IMR-90 (cell line): ENCODE measurements at regions of chr7 and their contacts with region 1.

Region 1: GRCh38 chr7:10412422-10413019 is 561.2 kb upstream of the PHF14 start:
- DNase-seq: peak; percentile 1
- ATAC-seq: no peak
- H3K4me3 ChIP-seq: no peak overlapping the region
- H3K27ac ChIP-seq: no peak overlapping the region
- H3K4me1 ChIP-seq: no peaks in the 10 kb centered on the region
- H3K27me3 ChIP-seq: no peaks in the 10 kb centered on the region
- CTCF ChIP-seq: peak; percentile 26
- POLR2A ChIP-seq: no peak
- RAD21 ChIP-seq: 0 out of 2 replicates have a peak, but pooled peaks have one; percentile 7

Region 2: GRCh38 chr7:8418629-8419245 is 1993.8 kb before region 1 on chr7:
- CTCF ChIA-PET with region 1: no interaction called
- POLR2A ChIA-PET with region 1: no interaction called
- dilution Hi-C with region 1: no loop called
- in situ Hi-C with region 1: no loop called
- intact Hi-C with region 1: loop called (anchors 5 kb)
- DNase-seq: peak; percentile 40
- ATAC-seq: no peak
- H3K4me3 ChIP-seq: no peak overlapping the region
- H3K27ac ChIP-seq: no peak overlapping the region
- H3K4me1 ChIP-seq: no peaks in the 10 kb centered on the region
- H3K27me3 ChIP-seq: no peaks in the 10 kb centered on the region
- CTCF ChIP-seq: peak; percentile 59
- POLR2A ChIP-seq: no peak
- RAD21 ChIP-seq: peak; percentile 57

Region 3: DNA sequence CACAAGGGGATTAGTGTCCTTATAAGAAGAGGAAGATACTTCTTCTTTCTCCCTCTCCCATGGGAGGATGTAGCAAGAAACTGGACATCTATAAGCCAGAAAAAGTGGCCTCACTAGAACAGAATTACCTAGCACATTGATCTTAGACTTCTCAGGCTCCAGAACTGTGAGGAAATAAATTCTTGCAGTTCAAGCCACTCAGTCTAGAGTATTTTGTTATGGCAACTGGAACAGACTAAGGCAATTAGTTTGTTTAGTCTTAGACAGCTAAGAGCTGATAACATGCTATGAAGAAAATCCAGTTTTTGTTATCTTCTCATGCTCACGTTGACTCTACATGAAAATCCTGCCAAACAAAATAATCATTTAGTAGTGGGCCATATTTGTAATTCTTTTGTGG is 66.5 kb before region 1 on chr7:
- CTCF ChIA-PET with region 1: no interaction called
- POLR2A ChIA-PET with region 1: no interaction called
- dilution Hi-C with region 1: no loop called
- in situ Hi-C with region 1: no loop called
- intact Hi-C with region 1: no loop called
- DNase-seq: no peak
- ATAC-seq: no peak
- H3K4me3 ChIP-seq: no peak overlapping the region
- H3K27ac ChIP-seq: no peak overlapping the region
- H3K4me1 ChIP-seq: no peaks in the 10 kb centered on the region
- H3K27me3 ChIP-seq: no peaks in the 10 kb centered on the region
- CTCF ChIP-seq: no peak
- POLR2A ChIP-seq: no peak
- RAD21 ChIP-seq: no peak